A673 (cell line): ENCODE measurements at regions of chr2 and their contacts with region 1.

Region 1: DNA sequence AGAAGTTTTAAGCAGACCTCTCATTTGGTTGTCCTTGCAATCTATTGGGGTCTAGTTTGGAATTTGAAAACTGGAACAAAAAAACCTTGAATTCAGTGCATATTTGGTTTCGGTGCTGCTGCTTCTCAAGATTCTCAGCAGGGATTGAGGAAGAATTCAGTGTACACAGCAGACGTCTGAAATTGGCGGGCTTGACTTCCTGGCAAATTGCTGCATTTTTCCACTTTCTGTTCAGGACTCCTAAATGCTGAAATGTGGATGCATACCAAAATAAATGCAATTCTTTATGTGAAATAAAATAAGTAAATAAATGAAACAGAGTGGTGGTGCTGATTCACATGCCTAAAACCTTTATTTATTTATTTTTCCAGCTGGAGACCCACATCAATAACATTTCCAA is 332.4 kb upstream of the KYNU start:
- DNase-seq: peak; percentile 54
- H3K4me3 ChIP-seq: no peak overlapping the region
- H3K27ac ChIP-seq: peak overlapping the region; percentile 98
- H3K4me1 ChIP-seq: peaks cover 50% of the 10 kb centered on the region
- H3K27me3 ChIP-seq: no peaks in the 10 kb centered on the region
- CTCF ChIP-seq: no peak

Region 2: GRCh38 chr2:141468761-141469160 is 1076.3 kb before region 1 on chr2:
- CTCF ChIA-PET with region 1: no interaction called
- POLR2A ChIA-PET with region 1: no interaction called
- intact Hi-C with region 1: loop called (anchors 5 kb)
- DNase-seq: no peak
- H3K4me3 ChIP-seq: no peak overlapping the region
- H3K27ac ChIP-seq: no peak overlapping the region
- H3K4me1 ChIP-seq: peaks cover 13% of the 10 kb centered on the region
- H3K27me3 ChIP-seq: no peaks in the 10 kb centered on the region
- CTCF ChIP-seq: no peak

Region 3: GRCh38 chr2:142165790-142166189 is 379.2 kb before region 1 on chr2:
- CTCF ChIA-PET with region 1: no interaction called
- POLR2A ChIA-PET with region 1: no interaction called
- intact Hi-C with region 1: loop called (anchors 5 kb)
- DNase-seq: peak; percentile 94
- H3K4me3 ChIP-seq: no peak overlapping the region
- H3K27ac ChIP-seq: no peak overlapping the region
- H3K4me1 ChIP-seq: peaks cover 9% of the 10 kb centered on the region
- H3K27me3 ChIP-seq: no peaks in the 10 kb centered on the region
- CTCF ChIP-seq: peak; percentile 81

Region 4: GRCh38 chr2:142180820-142181535 is 364.1 kb before region 1 on chr2:
- CTCF ChIA-PET with region 1: no interaction called
- POLR2A ChIA-PET with region 1: interaction called, 3 read pairs
- intact Hi-C with region 1: loop called (anchors 1 kb)
- DNase-seq: peak; percentile 69
- H3K4me3 ChIP-seq: no peak overlapping the region
- H3K27ac ChIP-seq: no peak overlapping the region
- H3K4me1 ChIP-seq: peaks cover 24% of the 10 kb centered on the region
- H3K27me3 ChIP-seq: no peaks in the 10 kb centered on the region
- CTCF ChIP-seq: peak; percentile 69

Region 5: GRCh38 chr2:142603759-142604158 is 58.7 kb after region 1 on chr2:
- CTCF ChIA-PET with region 1: no interaction called
- POLR2A ChIA-PET with region 1: no interaction called
- intact Hi-C with region 1: loop called (anchors 1 kb)
- DNase-seq: peak; percentile 57
- H3K4me3 ChIP-seq: no peak overlapping the region
- H3K27ac ChIP-seq: no peak overlapping the region
- H3K4me1 ChIP-seq: peaks cover 34% of the 10 kb centered on the region
- H3K27me3 ChIP-seq: no peaks in the 10 kb centered on the region
- CTCF ChIP-seq: peak; percentile 71